ENCODE measurements at regions of chr16 and their contacts with region 1.

Region 1: DNA sequence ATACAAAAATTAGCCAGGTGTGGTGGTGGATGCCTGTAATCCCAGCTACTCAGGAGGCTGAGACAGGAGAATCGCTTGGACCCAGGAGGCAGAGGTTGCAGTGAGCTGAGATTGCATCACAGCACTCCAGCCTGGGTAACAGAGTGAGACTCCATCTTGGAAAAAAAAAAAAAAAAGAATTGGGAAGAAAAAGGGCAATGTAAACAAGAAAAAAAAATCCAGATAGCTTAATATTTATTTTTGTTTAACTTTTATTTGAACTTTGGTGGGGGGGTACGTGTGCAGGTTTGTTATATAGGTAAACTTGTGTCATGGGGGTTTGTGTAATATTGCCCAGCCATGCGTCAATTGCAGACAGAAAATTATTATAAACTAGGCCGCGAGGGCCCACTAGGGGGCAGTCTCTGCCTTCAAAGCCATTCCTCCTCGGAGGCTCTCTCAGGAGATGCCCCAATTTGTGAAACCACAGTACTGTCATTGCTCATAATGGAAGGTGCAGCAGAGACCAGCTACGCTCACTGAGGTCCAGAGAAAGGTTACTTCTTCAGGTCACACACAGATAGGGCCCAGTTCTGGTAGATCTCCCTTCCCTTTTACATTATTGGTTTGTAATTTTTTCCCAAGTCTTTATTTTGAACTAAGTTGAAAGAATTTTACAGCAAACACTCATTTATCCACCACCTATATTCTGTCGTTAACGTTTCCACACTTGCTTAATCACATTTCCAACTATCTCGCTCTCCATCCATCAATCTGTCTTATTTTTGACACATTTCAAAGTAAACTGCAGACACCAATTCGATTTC is 206.2 kb downstream of the PRKCB start:
- DNase-seq: peak; percentile 49
- ATAC-seq: peak; percentile 88
- H3K4me3 ChIP-seq: no peak overlapping the region
- H3K27ac ChIP-seq: no peak overlapping the region
- H3K4me1 ChIP-seq: no peaks in the 10 kb centered on the region
- H3K27me3 ChIP-seq: no peaks in the 10 kb centered on the region
- CTCF ChIP-seq: peak; percentile 77 to 84 (median 82); a peak in 5 of 6 replicates
- POLR2A ChIP-seq: no peak
- RAD21 ChIP-seq: peak; percentile 85

Region 2: DNA sequence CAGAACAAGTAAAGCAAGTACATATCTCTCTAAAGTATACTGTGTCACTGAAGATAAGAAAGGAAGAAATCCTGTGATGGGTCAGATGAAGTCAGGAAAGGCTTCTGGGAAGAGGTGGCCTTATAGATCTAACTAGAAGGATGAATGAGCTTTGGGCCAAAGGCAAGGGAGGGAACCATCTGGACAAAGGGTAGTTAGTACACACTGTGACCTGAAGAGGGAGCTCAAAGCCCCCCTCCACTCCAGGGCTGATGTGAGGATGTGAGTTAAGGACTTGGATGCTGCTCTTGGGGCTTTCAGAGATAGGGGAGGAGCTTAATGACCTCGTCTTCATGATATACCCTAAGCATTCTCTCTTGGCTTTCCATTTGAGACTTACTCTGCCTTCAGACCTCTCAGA is 28.8 kb after region 1 on chr16:
- CTCF ChIA-PET with region 1: interaction called, 12 read pairs
- POLR2A ChIA-PET with region 1: no interaction called
- RAD21 ChIA-PET with region 1: no interaction called
- intact Hi-C with region 1: no loop called
- DNase-seq: peak; percentile 43
- ATAC-seq: peak; percentile 97
- H3K4me3 ChIP-seq: no peak overlapping the region
- H3K27ac ChIP-seq: no peak overlapping the region
- H3K4me1 ChIP-seq: no peaks in the 10 kb centered on the region
- H3K27me3 ChIP-seq: peaks cover 35% of the 10 kb centered on the region
- CTCF ChIP-seq: peak; percentile 38 to 75 (median 66); a peak in 5 of 6 replicates
- POLR2A ChIP-seq: no peak
- RAD21 ChIP-seq: peak; percentile 62

Region 3: GRCh38 chr16:24253192-24253591 is 211.2 kb after region 1 on chr16:
- CTCF ChIA-PET with region 1: interaction called, 15 read pairs
- POLR2A ChIA-PET with region 1: no interaction called
- RAD21 ChIA-PET with region 1: interaction called, 4 to 5 read pairs
- intact Hi-C with region 1: loop called (anchors 1 kb)
- DNase-seq: peak; percentile 34
- ATAC-seq: peak; percentile 88
- H3K4me3 ChIP-seq: no peak overlapping the region
- H3K27ac ChIP-seq: no peak overlapping the region
- H3K4me1 ChIP-seq: no peaks in the 10 kb centered on the region
- H3K27me3 ChIP-seq: 0 out of 2 replicates have a peak, but pooled peaks cover 8% of the 10 kb centered on the region
- CTCF ChIP-seq: peak; percentile 42 to 73 (median 64); a peak in 5 of 6 replicates
- POLR2A ChIP-seq: no peak
- RAD21 ChIP-seq: peak; percentile 54

Region 4: DNA sequence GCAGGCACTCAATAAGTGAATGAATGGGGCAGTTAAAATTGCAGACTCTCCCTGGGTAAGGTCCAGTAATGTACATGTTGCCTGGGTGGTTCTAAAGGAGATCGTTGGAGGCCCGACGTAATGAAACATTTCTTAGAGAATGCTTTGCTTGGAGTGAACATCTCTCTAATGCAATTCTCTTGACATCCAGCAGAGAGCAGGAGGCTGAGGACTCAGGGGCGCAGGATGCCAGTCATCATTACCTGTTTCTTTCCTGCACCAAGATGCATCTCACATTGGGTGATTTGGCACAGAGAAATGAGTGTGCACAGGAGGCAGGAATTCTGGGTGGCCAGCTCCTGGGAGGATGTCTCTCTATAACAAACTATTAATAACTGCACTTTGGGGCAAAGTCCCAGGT is 367.0 kb after region 1 on chr16:
- CTCF ChIA-PET with region 1: no interaction called
- POLR2A ChIA-PET with region 1: no interaction called
- RAD21 ChIA-PET with region 1: no interaction called
- intact Hi-C with region 1: loop called (anchors 5 kb)
- DNase-seq: peak; percentile 7
- ATAC-seq: peak; percentile 86
- H3K4me3 ChIP-seq: no peak overlapping the region
- H3K27ac ChIP-seq: no peak overlapping the region
- H3K4me1 ChIP-seq: no peaks in the 10 kb centered on the region
- H3K27me3 ChIP-seq: no peaks in the 10 kb centered on the region; the same call in 1 of the 2 replicates
- CTCF ChIP-seq: peak; percentile 34 to 65 (median 47); a peak in 4 of 6 replicates
- POLR2A ChIP-seq: no peak
- RAD21 ChIP-seq: peak; percentile 34; the same call in 1 of the 2 replicates

Region 5: GRCh38 chr16:24499193-24499814 is 457.3 kb after region 1 on chr16:
- CTCF ChIA-PET with region 1: interaction called, 101 read pairs
- POLR2A ChIA-PET with region 1: interaction called, 4 read pairs
- RAD21 ChIA-PET with region 1: interaction called, 12 to 15 read pairs
- intact Hi-C with region 1: loop called (anchors 1 kb)
- DNase-seq: peak; percentile 37
- ATAC-seq: peak; percentile 94
- H3K4me3 ChIP-seq: no peak overlapping the region
- H3K27ac ChIP-seq: no peak overlapping the region
- H3K4me1 ChIP-seq: peaks cover 0 to 4% of the 10 kb centered on the region in 2 experiments; a peak in 1 of 4 replicates
- H3K27me3 ChIP-seq: no peaks in the 10 kb centered on the region
- CTCF ChIP-seq: peak; percentile 61 to 73 (median 68)
- POLR2A ChIP-seq: no peak
- RAD21 ChIP-seq: peak; percentile 87